Heart right ventricle (tissue), 16 donors: ENCODE measurements at regions of chr10 and their contacts with region 1.

Region 1: GRCh38 chr10:71999360-72000072 is 35.3 kb downstream of the CHST3 start:
- DNase-seq: peak; percentile 85 to 86
- ATAC-seq: peak; percentile 76 to 92 (median 83)
- H3K4me3 ChIP-seq: peak overlapping the region in 1 of 10 donors; percentile 4
- H3K27ac ChIP-seq: peak overlapping the region; percentile 14 to 88 (median 82)
- H3K4me1 ChIP-seq: peaks cover 15 to 74% (median 64%) of the 10 kb centered on the region in 9 donors
- H3K27me3 ChIP-seq: no peaks in the 10 kb centered on the region
- CTCF ChIP-seq: no peak

Region 2: DNA sequence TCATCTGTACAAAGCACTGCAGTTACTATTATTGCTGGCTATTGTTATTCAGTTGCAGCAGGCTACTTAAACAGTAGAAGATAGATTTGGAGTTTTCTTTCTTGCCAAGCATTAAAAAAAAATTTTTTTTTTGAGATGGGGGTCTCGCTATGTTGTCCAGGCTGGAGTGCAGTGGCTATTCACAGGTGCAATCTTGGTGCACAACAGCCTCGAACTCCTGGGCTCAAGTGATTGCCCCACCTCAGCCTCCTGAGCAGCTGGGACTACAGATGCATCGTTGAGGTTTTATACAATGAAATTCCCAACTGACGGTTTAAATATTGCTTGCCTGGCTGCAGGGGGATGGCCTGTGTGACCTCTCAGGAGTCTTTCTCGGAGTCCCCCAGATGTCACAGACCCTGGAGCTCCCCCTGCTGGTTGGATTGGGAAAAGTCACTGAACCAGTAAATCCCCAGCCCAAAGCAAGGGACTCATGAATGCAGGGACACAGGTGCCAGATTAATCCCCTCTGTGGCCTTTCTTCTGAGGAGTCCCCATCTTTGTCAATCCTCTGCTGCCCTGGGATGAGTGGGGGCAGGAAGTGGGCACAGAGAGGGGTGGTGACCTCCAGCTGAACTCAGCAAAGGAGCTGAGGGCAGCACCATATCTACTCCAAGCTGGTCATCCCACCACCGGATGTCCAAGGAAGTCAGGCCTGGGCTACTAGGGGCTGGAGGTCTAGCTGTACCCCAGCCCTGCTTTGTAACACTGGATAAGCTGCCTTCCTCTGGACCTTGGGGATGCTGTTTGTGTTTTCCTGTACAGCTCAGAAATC is 429.5 kb before region 1 on chr10:
- intact Hi-C with region 1: no loop called
- DNase-seq: peak; percentile 58 to 77
- ATAC-seq: peak in 7 of 8 donors; percentile 44 to 73 (median 68)
- H3K4me3 ChIP-seq: no peak overlapping the region
- H3K27ac ChIP-seq: no peak overlapping the region
- H3K4me1 ChIP-seq: no peaks in the 10 kb centered on the region
- H3K27me3 ChIP-seq: no peaks in the 10 kb centered on the region
- CTCF ChIP-seq: peak; percentile 74 to 89 (median 87)

Region 3: GRCh38 chr10:71868192-71868697 is 131.3 kb before region 1 on chr10:
- intact Hi-C with region 1: no loop called
- DNase-seq: peak in 1 of 2 donors; percentile 44
- ATAC-seq: peak; percentile 42 to 82 (median 75)
- H3K4me3 ChIP-seq: no peak overlapping the region
- H3K27ac ChIP-seq: peak overlapping the region in 2 of 10 donors; percentile 28 to 45
- H3K4me1 ChIP-seq: peaks cover 0 to 35% (median 0%) of the 10 kb centered on the region in 9 donors
- H3K27me3 ChIP-seq: no peaks in the 10 kb centered on the region
- CTCF ChIP-seq: no peak

Region 4: DNA sequence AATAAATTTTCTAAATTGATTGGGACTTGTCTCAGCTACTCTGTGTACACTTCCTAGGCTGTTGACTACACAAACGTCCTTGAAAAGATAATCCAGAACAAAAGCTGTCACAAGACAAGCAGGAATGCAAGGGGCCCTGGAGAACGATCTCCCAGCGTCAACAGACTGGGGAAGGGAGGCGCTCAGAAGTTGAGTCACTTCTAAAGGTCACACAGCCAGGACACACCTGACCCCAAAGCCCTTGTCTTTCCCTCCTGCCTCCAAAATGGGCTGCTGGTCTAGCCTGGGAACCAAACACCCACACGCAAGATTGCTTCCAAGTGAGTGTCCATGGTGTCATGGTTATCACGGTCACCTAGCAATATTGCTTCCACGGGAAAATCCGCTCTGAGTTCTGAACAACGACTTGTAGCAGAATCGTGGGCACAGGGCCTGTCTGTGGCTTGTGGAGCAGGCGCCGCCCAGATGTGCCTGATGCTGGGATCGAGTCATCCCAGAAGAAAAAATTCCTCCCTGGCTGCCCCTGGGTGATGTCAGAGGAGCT is 39.0 kb after region 1 on chr10:
- intact Hi-C with region 1: loop called in 1 of 10 experiments (anchors 5 kb)
- DNase-seq: no peak
- ATAC-seq: peak in 3 of 8 donors; percentile 4 to 48 (median 30)
- H3K4me3 ChIP-seq: no peak overlapping the region
- H3K27ac ChIP-seq: peak overlapping the region in 1 of 10 donors; percentile 13
- H3K4me1 ChIP-seq: peaks cover 4 to 45% (median 12%) of the 10 kb centered on the region in 9 donors
- H3K27me3 ChIP-seq: no peaks in the 10 kb centered on the region
- CTCF ChIP-seq: no peak